ENCODE measurements at regions of chr4 and their contacts with region 1.

Region 1: DNA sequence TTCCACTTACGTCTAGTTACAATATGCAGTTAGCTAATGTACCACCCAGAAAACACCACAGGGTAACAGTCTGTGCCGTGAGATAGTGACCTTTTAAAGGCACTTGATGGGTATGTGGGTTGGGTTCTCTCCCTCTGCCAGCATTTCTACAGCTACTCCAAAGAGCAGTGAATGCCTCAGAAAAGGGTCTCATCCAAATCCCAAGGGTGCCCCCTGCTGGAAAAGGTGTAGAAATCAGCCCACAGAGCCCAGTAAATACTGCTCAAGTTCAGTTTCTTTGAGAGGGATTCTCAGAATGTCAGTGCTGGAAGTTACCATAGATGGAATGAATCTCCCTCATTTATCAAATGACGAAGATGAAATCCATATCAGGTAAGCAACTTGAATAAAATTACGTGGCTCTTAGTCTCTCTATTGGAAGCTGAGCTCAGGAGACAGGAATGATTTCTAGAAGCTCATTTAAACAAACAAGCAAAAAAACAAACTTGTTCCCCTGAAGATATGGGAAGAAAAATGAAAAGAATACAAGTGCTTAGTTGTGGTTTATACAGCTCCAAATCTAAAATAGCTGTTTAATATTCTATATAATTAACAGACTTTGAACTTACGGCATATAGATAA is 9.5 kb downstream of the RNF175 start:
- DNase-seq: peak; percentile 70
- ATAC-seq: peak; percentile 96
- H3K4me3 Mint-ChIP-seq: no peak overlapping the region
- H3K27ac Mint-ChIP-seq: no peak overlapping the region
- H3K4me1 Mint-ChIP-seq: peaks cover 6% of the 10 kb centered on the region
- H3K27me3 Mint-ChIP-seq: no peaks in the 10 kb centered on the region
- CTCF ChIP-seq: peak; percentile 69

Region 2: DNA sequence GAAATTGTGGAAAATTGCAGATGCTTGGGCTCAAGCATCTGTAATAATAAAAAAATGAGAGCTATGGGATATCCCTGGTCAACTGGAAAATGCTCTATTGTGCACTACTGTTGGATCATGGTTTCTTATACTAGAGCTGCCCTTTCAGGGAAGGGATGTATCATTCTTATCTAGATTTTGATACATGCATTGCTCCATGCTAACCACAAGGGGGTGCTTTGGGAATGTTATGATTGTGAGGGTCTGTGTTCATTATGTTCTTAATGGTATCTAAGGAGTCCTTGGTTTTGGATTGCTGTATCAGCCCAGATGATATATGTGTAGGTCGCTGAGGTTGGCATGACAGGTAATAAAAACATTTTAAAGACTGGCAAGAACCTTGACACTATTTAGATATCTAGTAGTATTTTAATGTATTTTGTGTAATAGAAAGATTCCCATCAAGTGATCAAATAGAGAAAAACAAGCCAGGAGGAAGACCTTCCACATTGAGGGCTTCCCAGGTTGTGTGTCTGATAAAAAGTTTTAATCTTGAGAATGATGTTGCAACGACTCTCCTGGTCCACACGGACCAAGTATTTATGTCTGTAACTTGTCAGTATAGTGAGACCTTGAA is 115.5 kb before region 1 on chr4:
- CTCF ChIA-PET with region 1: interaction called, 11 read pairs
- POLR2A ChIA-PET with region 1: no interaction called
- intact Hi-C with region 1: loop called (anchors 5 kb)
- DNase-seq: no peak
- ATAC-seq: no peak
- H3K4me3 Mint-ChIP-seq: no peak overlapping the region
- H3K27ac Mint-ChIP-seq: peak overlapping the region; percentile 42
- H3K4me1 Mint-ChIP-seq: no peaks in the 10 kb centered on the region
- H3K27me3 Mint-ChIP-seq: no peaks in the 10 kb centered on the region
- CTCF ChIP-seq: peak; percentile 76

Region 3: GRCh38 chr4:153649572-153649991 is 100.7 kb before region 1 on chr4:
- CTCF ChIA-PET with region 1: interaction called, 48 read pairs
- POLR2A ChIA-PET with region 1: no interaction called
- intact Hi-C with region 1: loop called (anchors 2 kb)
- DNase-seq: peak; percentile 28
- ATAC-seq: no peak
- H3K4me3 Mint-ChIP-seq: no peak overlapping the region
- H3K27ac Mint-ChIP-seq: no peak overlapping the region
- H3K4me1 Mint-ChIP-seq: peaks cover 26% of the 10 kb centered on the region
- H3K27me3 Mint-ChIP-seq: no peaks in the 10 kb centered on the region
- CTCF ChIP-seq: peak; percentile 47

Region 4: DNA sequence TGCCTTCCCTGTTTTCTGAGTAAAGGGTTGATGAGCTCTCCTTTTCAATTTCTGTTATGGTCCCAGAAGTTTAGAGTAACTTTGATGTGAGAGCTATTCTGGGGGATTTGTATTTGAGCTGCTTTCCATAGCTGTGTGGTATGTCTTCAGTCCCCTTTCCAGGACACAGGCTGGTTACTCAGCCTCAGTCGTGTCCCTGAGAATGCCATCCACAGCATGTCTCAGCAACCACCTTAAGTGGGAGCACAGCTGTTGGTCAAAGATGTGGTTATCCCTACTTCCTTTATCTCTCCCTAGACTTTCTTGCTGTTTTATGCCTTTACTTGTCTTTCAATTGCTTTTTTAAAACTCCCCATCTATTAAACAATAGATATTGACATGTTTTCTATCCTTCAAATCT is 28.3 kb before region 1 on chr4:
- CTCF ChIA-PET with region 1: interaction called, 21 read pairs
- POLR2A ChIA-PET with region 1: no interaction called
- intact Hi-C with region 1: no loop called
- DNase-seq: no peak
- ATAC-seq: no peak
- H3K4me3 Mint-ChIP-seq: no peak overlapping the region
- H3K27ac Mint-ChIP-seq: no peak overlapping the region
- H3K4me1 Mint-ChIP-seq: no peaks in the 10 kb centered on the region
- H3K27me3 Mint-ChIP-seq: peaks cover 5% of the 10 kb centered on the region
- CTCF ChIP-seq: no peak